ENCODE measurements at regions of chr1 and their contacts with region 1.

Region 1: GRCh38 chr1:200971955-200972711 is 51.4 kb downstream of the KIF21B start:
- DNase-seq: peak; percentile 71
- ATAC-seq: no peak
- H3K4me3 Mint-ChIP-seq: no peak overlapping the region
- H3K27ac Mint-ChIP-seq: no peak overlapping the region
- H3K4me1 Mint-ChIP-seq: peaks cover 27% of the 10 kb centered on the region
- H3K27me3 Mint-ChIP-seq: no peaks in the 10 kb centered on the region
- CTCF ChIP-seq: peak; percentile 99

Region 2: DNA sequence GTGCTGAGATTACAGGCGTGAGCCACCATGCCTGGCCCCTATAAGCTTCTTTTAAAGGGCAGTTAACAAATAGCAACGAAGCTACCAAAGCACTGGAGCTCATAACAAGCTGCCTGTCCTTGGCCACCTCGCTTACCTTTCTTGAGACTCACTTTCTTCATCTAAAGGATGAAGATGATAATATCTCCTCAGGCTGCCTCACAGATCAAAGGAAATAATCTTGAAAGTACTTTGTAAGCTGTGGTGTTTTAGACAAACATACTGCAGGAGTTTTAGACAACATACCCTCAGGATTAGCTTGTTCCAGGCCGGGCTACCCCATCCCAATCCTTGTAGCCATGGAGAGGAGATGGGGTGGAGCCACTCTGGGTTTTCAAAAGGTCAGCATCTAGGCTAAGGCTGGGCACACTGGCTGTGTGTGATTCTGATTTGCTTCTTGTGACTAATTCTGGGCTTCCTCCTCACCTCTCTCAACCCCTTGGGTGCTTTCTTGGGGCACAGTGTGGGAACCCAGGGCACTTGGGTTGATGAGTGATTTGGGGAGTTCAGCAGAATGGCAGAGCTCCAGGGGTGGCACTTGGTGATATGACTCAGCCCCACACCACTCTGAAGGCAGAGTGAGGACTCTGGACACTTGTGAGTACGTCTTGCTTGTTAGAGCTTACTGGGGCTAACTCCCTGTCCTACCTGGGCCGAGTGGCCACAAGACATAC is 94.1 kb before region 1 on chr1:
- CTCF ChIA-PET with region 1: interaction called, 12 read pairs
- POLR2A ChIA-PET with region 1: no interaction called
- intact Hi-C with region 1: no loop called
- DNase-seq: peak; percentile 83
- ATAC-seq: peak; percentile 83
- H3K4me3 Mint-ChIP-seq: no peak overlapping the region
- H3K27ac Mint-ChIP-seq: no peak overlapping the region
- H3K4me1 Mint-ChIP-seq: peaks cover 32% of the 10 kb centered on the region
- H3K27me3 Mint-ChIP-seq: peaks cover 29% of the 10 kb centered on the region
- CTCF ChIP-seq: no peak

Region 3: DNA sequence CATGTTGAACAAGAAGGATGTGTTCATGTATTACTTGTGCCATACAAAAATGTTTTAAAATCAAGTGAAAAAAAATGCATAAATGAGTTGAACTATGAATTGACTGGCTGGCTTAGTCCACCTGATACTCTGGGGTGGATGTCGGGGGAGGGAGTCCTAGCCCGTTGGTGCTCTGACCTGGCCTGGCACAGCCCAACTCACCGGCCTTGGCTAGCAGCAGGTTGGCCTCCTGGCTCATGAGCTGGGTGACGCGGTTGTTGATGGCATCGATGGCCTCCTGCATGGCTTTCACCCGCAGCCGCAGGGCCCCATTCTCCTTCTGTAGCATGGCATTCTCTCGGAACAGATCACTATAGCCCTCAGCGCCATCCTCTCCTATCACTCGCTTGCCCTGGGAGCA is 29.8 kb after region 1 on chr1:
- CTCF ChIA-PET with region 1: interaction called, 10 read pairs
- POLR2A ChIA-PET with region 1: no interaction called
- intact Hi-C with region 1: no loop called
- DNase-seq: no peak
- ATAC-seq: no peak
- H3K4me3 Mint-ChIP-seq: no peak overlapping the region
- H3K27ac Mint-ChIP-seq: peak overlapping the region; percentile 55
- H3K4me1 Mint-ChIP-seq: peaks cover 21% of the 10 kb centered on the region
- H3K27me3 Mint-ChIP-seq: no peaks in the 10 kb centered on the region
- CTCF ChIP-seq: no peak

Region 4: GRCh38 chr1:201023517-201023902 is 51.4 kb after region 1 on chr1 and contains the start of gene KIF21B:
- CTCF ChIA-PET with region 1: interaction called, 109 read pairs
- POLR2A ChIA-PET with region 1: interaction called, 6 read pairs
- intact Hi-C with region 1: no loop called
- DNase-seq: peak; percentile 92
- ATAC-seq: peak; percentile 70
- H3K4me3 Mint-ChIP-seq: peak within 1 kb of the TSS; percentile 91
- H3K27ac Mint-ChIP-seq: peak within 1 kb of the TSS; percentile 97
- H3K4me1 Mint-ChIP-seq: peaks cover 60% of the 10 kb centered on the region
- H3K27me3 Mint-ChIP-seq: no peaks in the 10 kb centered on the region
- CTCF ChIP-seq: no peak
- total RNA-seq, gene KIF21B: 93.5 to 94.0 TPM

Region 5: GRCh38 chr1:201114236-201115131 is 142.4 kb after region 1 on chr1:
- CTCF ChIA-PET with region 1: interaction called, 39 read pairs
- POLR2A ChIA-PET with region 1: interaction called, 4 read pairs
- intact Hi-C with region 1: loop called (anchors 10 kb)
- DNase-seq: peak; percentile 88
- ATAC-seq: peak; percentile 93
- H3K4me3 Mint-ChIP-seq: peak overlapping the region; percentile 86
- H3K27ac Mint-ChIP-seq: peak overlapping the region; percentile 81
- H3K4me1 Mint-ChIP-seq: peaks cover 2% of the 10 kb centered on the region
- H3K27me3 Mint-ChIP-seq: no peaks in the 10 kb centered on the region
- CTCF ChIP-seq: peak; percentile 87

Measured in activated CD8-positive, alpha-beta T cell treated with anti-CD3 and anti-CD28 coated beads for 36 hours (primary cell).